BJ (cell line): ENCODE measurements at regions of chr2 and their contacts with region 1.

Region 1: DNA sequence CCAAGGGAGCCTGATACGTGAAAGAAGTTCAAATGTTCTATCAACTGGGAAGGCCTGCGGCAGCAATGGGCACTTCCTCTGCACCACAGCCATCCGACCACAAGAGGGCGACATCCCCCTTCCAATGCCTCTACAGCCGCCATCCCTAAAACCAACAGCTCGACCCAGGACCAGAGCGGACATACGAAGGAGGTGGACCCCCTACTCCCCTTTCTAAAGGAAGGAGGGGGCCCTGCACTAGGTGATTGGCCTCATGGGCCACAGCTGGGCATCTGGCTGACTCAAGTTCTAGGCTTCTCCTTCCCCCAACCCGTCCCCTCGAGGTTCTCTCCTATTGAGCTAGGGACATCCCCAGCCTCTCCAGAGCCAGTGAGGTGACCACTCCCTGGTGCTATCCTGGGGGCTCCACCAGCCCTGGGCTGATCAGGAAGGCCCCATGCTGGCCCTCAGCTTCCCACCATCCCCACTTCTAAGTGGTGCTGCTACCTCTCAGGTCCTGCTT is 217.2 kb downstream of the TNS1 start:
- DNase-seq: no peak
- H3K4me3 ChIP-seq: no peak overlapping the region
- H3K27me3 ChIP-seq: no peaks in the 10 kb centered on the region
- CTCF ChIP-seq: peak; percentile 95

Region 2: GRCh38 chr2:217585362-217585761 is 200.2 kb before region 1 on chr2:
- CTCF ChIA-PET with region 1: no interaction called
- POLR2A ChIA-PET with region 1: no interaction called
- DNase-seq: no peak
- H3K4me3 ChIP-seq: no peak overlapping the region
- H3K27me3 ChIP-seq: peaks cover 16% of the 10 kb centered on the region
- CTCF ChIP-seq: no peak

Region 3: DNA sequence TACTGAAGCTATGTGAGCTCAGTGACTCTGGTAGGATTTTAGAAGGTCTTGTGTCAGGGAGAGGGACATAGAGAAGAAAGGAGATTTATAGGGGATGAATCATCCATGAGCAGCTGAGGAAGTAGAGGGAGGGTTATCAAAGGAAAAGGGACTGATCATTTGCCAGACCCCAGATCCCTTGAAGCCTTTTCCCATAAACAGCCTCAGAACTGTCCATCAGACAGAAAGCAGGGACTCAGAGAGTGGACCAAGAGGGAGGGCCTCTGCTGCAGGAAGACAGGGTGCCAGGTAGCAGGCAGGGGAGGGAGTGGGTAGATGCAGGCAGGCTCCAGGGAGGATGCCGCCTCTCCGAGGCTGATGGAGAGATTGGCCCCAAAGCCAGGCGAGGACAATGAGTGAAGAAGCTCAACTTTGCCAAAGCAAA is 83.3 kb after region 1 on chr2:
- CTCF ChIA-PET with region 1: interaction called, 22 read pairs
- POLR2A ChIA-PET with region 1: no interaction called
- DNase-seq: peak; percentile 9
- H3K4me3 ChIP-seq: no peak overlapping the region
- H3K27me3 ChIP-seq: no peaks in the 10 kb centered on the region
- CTCF ChIP-seq: no peak

Region 4: DNA sequence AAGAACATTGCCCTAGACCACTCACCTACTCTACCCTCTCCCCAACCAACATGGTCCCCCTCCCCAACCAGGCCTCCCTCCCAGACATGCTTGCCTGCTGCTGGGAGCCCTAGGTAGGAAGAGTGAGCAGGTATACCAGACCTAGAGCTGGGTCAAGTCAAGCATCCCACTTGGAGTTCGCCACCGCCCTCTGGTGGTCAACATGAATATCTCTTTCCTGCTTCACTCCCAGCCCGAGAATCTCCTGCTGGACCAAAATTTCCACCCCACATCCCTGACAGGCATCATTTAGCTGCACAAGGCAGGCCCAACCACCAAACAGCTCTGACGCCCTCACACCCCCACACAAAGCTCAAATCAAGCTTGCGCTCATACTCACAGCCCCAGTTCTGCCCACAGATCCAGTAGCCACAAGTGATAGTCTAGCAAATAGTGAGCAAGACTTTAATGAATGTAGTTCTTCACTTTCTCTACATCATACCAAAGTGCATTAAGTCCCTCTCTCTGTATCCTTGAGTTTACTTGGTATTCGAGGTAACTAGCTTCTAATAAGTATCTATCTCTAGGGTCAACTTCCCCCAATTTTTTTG is 101.2 kb after region 1 on chr2:
- CTCF ChIA-PET with region 1: interaction called, 264 read pairs
- POLR2A ChIA-PET with region 1: no interaction called
- DNase-seq: no peak
- H3K4me3 ChIP-seq: no peak overlapping the region
- H3K27me3 ChIP-seq: no peaks in the 10 kb centered on the region
- CTCF ChIP-seq: peak; percentile 81

Region 5: DNA sequence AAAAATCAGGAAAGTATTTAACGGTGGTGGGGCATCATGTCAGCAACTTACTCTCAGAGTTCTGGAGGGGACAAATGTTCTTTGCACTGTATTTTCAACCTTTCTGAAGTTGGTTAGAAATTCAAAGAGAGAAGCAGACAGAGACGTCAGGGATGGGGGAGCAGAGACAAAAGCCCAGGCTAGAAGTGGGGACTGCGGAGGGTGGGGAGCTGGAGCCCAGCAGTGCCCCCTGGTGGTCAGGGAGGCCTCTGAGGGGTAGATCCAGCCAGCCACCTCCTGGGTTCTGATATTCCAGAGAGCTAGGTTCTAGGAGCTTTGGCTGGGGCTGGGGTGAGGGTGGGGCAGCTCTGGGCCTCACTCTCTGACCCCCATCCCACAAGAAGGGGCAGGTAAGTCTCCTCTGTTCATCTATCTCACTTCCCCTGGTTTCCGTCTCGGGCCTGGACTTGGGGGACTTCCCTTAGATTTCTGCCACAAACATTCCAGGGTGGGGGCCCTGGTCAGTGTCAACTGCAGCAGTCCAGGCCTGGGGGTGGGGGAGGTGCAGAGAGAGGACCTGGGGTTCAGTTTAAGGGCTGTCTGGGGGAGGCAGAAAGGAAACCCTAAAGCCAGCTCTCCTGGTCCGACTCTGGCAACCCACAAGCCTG is 208.3 kb after region 1 on chr2:
- CTCF ChIA-PET with region 1: interaction called, 36 read pairs
- POLR2A ChIA-PET with region 1: no interaction called
- DNase-seq: no peak
- H3K4me3 ChIP-seq: no peak overlapping the region
- H3K27me3 ChIP-seq: no peaks in the 10 kb centered on the region
- CTCF ChIP-seq: peak; percentile 78

Region 6: GRCh38 chr2:218033590-218034496 is 248.2 kb after region 1 on chr2:
- CTCF ChIA-PET with region 1: interaction called, 176 read pairs
- POLR2A ChIA-PET with region 1: no interaction called
- DNase-seq: no peak
- H3K4me3 ChIP-seq: no peak overlapping the region
- H3K27me3 ChIP-seq: peaks cover 16% of the 10 kb centered on the region
- CTCF ChIP-seq: no peak

Region 7: DNA sequence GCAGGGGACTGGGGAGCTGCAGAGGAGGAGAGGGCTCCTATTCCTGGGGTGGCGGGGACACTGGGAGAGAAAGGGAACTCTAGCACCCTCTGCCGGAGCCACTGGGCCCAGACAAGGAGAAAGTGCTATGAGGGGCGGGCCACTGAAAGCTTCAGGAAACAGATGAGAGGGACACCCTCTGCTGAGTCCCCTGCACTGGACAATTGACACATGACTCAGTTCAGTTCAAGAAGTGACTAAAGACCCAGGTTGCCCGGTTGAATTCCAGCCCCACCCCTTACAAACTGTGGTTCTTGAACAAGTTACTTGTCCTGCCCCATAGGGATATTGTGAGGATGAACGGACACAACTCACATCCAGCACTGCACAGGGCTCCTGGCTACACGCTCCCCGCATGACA is 288.4 kb after region 1 on chr2:
- CTCF ChIA-PET with region 1: interaction called, 90 read pairs
- POLR2A ChIA-PET with region 1: no interaction called
- DNase-seq: no peak
- H3K4me3 ChIP-seq: no peak overlapping the region
- H3K27me3 ChIP-seq: peaks cover 38% of the 10 kb centered on the region
- CTCF ChIP-seq: peak; percentile 64